Activated CD4-positive, alpha-beta T cell treated with anti-CD3 and anti-CD28 coated beads for 36 hours (primary cell): ENCODE measurements at regions of chr13 and their contacts with region 1.

Region 1: DNA sequence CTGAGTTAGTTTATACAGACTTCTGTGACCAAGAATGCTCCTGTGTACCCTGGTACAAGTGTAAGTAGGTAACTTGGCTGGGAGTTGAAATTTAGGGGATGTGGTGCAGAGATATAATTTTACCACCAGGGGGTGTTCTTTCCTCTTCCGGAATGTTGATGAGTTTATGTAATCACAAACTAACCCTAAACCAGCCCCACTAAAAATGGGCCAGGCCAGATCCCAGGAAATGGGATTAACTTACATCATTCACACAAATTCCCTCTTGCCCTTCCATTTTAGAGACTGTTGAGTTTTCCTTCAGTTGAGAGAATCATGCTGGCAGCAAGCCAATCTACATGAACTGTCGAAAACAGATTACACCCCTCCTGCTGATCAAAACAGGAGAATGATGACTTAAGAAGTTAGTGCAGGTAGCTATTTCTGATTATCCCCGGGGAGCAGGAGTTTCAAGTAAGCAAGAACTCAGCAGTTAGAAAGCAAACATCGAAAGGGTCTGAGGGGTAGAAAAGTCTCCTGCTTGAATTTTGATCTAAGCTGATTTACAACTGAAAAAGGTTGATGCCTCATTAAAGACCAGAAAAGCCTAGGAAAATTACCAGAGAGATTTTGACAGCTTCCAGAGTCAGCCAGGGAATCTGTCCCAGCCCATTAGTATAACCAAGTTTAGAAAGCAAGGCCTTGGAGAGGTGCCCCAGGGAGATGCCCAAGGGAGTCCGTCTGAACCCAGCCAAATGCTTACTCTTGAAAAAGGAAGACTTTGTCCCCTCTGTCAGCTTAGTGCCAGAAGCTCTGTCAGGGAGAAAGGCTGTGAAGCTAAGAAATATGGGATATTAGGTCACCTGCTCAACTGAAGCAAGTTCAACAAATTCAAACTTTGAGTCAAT is 32.3 kb upstream of the MED4 start:
- DNase-seq: peak; percentile 33
- ATAC-seq: peak; percentile 77
- H3K4me3 Mint-ChIP-seq: no peak overlapping the region
- H3K27ac Mint-ChIP-seq: no peak overlapping the region
- H3K4me1 Mint-ChIP-seq: peaks cover 20% of the 10 kb centered on the region
- H3K27me3 Mint-ChIP-seq: no peaks in the 10 kb centered on the region

Region 2: DNA sequence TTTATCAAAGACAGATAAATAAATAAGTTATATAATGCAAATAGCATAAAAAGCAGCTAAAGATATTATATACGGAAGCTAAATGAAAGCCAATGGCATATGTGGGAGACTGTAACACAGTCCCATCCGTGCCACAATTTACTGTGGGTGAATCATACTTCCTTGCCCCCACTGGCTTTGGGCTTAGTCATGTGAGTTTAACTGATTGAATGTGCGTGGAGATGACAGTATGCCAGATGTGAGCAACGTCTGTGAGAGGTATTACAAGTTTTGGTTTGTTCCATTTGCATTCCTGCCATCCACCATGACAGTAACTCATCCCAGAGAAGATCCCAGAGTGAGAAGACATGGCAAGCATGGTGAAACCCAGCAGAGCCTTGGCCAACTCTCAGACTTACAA is 466.1 kb before region 1 on chr13:
- CTCF ChIA-PET with region 1: no interaction called
- POLR2A ChIA-PET with region 1: no interaction called
- intact Hi-C with region 1: no loop called
- DNase-seq: no peak
- ATAC-seq: no peak
- H3K4me3 Mint-ChIP-seq: no peak overlapping the region
- H3K27ac Mint-ChIP-seq: no peak overlapping the region
- H3K4me1 Mint-ChIP-seq: no peaks in the 10 kb centered on the region
- H3K27me3 Mint-ChIP-seq: peaks cover 18% of the 10 kb centered on the region

Region 3: DNA sequence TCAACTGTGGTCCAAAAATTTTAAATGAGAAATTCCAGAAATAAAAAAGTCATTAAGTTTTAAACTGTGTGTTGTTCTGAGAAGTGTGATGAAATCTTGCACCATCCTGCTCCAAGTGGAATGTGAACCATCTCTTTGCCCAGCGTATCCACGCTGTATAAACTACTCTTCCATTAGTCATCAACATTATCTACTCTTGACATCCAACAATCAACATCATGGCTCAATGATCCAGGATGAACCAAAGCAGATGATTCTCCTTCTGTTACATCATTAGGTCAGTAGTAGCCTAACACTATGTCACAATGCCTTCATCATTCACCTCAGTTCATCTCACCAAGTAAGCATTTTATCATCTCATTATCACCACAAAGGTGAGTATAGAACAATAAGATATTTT is 181.4 kb before region 1 on chr13:
- CTCF ChIA-PET with region 1: no interaction called
- POLR2A ChIA-PET with region 1: no interaction called
- intact Hi-C with region 1: no loop called
- DNase-seq: no peak
- ATAC-seq: no peak
- H3K4me3 Mint-ChIP-seq: no peak overlapping the region
- H3K27ac Mint-ChIP-seq: peak overlapping the region; percentile 11
- H3K4me1 Mint-ChIP-seq: no peaks in the 10 kb centered on the region
- H3K27me3 Mint-ChIP-seq: no peaks in the 10 kb centered on the region

Region 4: DNA sequence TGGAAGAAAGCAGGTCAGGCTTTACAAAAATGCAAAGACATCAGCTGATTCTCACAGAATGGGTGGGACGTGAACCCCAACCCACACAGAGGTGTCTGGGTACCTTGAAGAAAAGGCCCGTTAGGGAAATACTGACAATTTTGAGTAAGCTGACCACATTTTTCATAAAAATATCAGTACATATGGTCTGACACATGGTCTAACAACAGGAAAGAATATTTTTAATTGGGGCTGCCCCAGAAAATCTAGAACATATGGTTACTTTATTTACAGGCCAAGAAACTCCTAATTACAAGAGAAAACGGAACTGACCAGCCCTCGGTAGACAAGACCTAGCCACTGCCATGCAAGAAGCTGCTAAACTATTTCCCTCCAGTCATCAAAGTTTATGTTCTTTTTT is 57.1 kb after region 1 on chr13:
- CTCF ChIA-PET with region 1: interaction called, 3 read pairs
- POLR2A ChIA-PET with region 1: interaction called, 4 read pairs
- intact Hi-C with region 1: loop called in 1 of 2 experiments (anchors 5 kb)
- DNase-seq: no peak
- ATAC-seq: no peak
- H3K4me3 Mint-ChIP-seq: no peak overlapping the region
- H3K27ac Mint-ChIP-seq: peak overlapping the region; percentile 9
- H3K4me1 Mint-ChIP-seq: peaks cover 59% of the 10 kb centered on the region
- H3K27me3 Mint-ChIP-seq: no peaks in the 10 kb centered on the region

Region 5: GRCh38 chr13:48303359-48304142 is 176.4 kb after region 1 on chr13 and contains the start of gene RB1:
- CTCF ChIA-PET with region 1: interaction called, 8 read pairs
- POLR2A ChIA-PET with region 1: no interaction called
- intact Hi-C with region 1: loop called (anchors 1 to 2 kb)
- DNase-seq: peak; percentile 94
- ATAC-seq: peak; percentile 81
- H3K4me3 Mint-ChIP-seq: peak within 1 kb of the TSS; percentile 81
- H3K27ac Mint-ChIP-seq: peak within 1 kb of the TSS; percentile 99
- H3K4me1 Mint-ChIP-seq: peaks cover 27% of the 10 kb centered on the region
- H3K27me3 Mint-ChIP-seq: no peaks in the 10 kb centered on the region
- total RNA-seq, gene RB1: 26.9 to 32.8 TPM

Region 6: GRCh38 chr13:48318821-48319511 is 191.8 kb after region 1 on chr13:
- CTCF ChIA-PET with region 1: no interaction called
- POLR2A ChIA-PET with region 1: no interaction called
- intact Hi-C with region 1: loop called in 1 of 2 experiments (anchors 5 kb)
- DNase-seq: peak; percentile 53
- ATAC-seq: peak; percentile 50
- H3K4me3 Mint-ChIP-seq: peak overlapping the region; percentile 69
- H3K27ac Mint-ChIP-seq: peak overlapping the region; percentile 56
- H3K4me1 Mint-ChIP-seq: peaks cover 23% of the 10 kb centered on the region
- H3K27me3 Mint-ChIP-seq: peaks cover 3% of the 10 kb centered on the region

Region 7: DNA sequence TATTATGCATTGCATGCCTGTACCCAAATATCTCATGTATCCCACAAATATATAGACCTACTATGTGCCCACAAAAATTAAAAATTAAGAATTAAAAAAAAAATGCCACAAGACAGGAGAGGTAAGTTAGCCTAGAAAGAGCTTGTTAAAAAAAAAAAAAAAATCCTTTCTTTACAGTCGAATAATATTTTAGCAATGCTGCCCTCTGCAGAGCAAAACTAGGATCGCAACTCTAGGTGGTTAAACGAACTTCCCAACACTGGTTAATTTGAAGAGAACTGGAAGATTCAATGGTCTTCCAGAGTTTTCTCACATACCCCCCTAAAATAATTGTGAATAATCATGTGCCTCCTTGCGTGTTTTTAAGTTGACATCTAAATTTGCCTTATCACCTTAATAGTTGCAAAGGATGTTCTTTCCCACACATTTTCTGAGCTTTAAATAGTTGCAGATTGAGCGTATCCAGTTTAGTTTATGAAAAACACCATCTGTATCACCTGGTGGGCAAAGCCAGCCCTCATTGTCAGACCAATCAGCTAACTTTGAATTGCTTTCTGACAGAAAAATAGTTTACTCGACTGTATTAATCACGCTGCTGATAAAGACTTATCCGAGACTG is 453.1 kb after region 1 on chr13:
- CTCF ChIA-PET with region 1: interaction called, 17 read pairs
- POLR2A ChIA-PET with region 1: no interaction called
- intact Hi-C with region 1: loop called (anchors 1 kb)
- DNase-seq: peak; percentile 81
- ATAC-seq: no peak
- H3K4me3 Mint-ChIP-seq: no peak overlapping the region
- H3K27ac Mint-ChIP-seq: no peak overlapping the region
- H3K4me1 Mint-ChIP-seq: no peaks in the 10 kb centered on the region
- H3K27me3 Mint-ChIP-seq: peaks cover 16% of the 10 kb centered on the region